ENCODE measurements at regions of chr6 and their contacts with region 1.

Region 1: GRCh38 chr6:34248727-34249551 is at the start of gene SMIM29:
- DNase-seq: peak; percentile 97
- ATAC-seq: peak; percentile 88
- H3K4me3 Mint-ChIP-seq: peak within 1 kb of the TSS; percentile 85
- H3K27ac Mint-ChIP-seq: peak within 1 kb of the TSS; percentile 89
- H3K4me1 Mint-ChIP-seq: peaks cover 37% of the 10 kb centered on the region
- H3K27me3 Mint-ChIP-seq: no peaks in the 10 kb centered on the region
- CTCF ChIP-seq: peak; percentile 88
- total RNA-seq, gene SMIM29: 13.3 to 16.4 TPM

Region 2: DNA sequence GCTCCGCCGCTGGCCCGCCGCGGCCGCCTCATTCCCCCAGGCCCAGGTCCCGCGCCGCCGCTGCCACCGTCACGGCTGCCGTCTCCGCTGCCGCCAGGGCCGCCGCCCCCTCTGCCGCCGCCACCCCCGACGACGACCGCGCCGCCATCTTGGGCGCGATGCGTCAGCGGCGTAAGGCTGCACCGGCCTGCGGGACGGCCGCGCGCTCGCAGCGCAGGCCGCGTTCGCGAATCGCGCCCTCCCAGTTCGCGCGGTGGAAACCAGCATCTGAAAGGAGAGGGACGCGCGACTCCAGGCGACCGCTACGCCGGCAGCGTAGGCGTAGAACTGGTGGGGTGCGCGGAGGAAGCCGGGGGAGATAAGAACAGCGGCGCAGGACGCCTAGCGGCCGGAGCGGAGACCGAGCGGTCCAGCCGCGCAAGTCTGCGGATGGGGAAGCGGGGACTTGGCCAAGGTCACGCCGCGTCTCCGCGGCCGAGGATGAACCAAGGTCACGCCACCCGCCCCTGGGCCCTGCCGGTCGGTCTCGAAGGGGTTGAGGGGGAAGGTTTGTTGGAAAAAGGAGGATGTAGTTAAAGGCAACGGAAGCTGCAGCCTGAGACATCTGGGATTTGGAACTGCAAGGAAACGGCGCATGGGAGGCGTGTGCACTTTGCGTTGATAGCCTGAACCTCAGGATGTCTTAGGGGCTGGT is 143.7 kb after region 1 on chr6 and contains the start of gene NUDT3:
- CTCF ChIA-PET with region 1: interaction called, 32 read pairs
- POLR2A ChIA-PET with region 1: interaction called, 7 read pairs
- intact Hi-C with region 1: loop called (anchors 1 kb)
- DNase-seq: peak; percentile 96
- ATAC-seq: peak; percentile 94
- H3K4me3 Mint-ChIP-seq: no peak within 1 kb of the TSS
- H3K27ac Mint-ChIP-seq: peak within 1 kb of the TSS; percentile 93
- H3K4me1 Mint-ChIP-seq: peaks cover 20% of the 10 kb centered on the region
- H3K27me3 Mint-ChIP-seq: no peaks in the 10 kb centered on the region
- CTCF ChIP-seq: peak; percentile 76
- total RNA-seq, gene NUDT3: 15.0 to 15.2 TPM

Region 3: GRCh38 chr6:34425498-34426410 is 176.8 kb after region 1 on chr6 and contains the start of gene RPS10:
- CTCF ChIA-PET with region 1: interaction called, 19 read pairs
- POLR2A ChIA-PET with region 1: interaction called, 33 read pairs
- intact Hi-C with region 1: no loop called
- DNase-seq: peak; percentile 92
- ATAC-seq: peak; percentile 98
- H3K4me3 Mint-ChIP-seq: peak within 1 kb of the TSS; percentile 98
- H3K27ac Mint-ChIP-seq: peak within 1 kb of the TSS; percentile 100
- H3K4me1 Mint-ChIP-seq: peaks cover 33% of the 10 kb centered on the region
- H3K27me3 Mint-ChIP-seq: peaks cover 2% of the 10 kb centered on the region
- CTCF ChIP-seq: no peak
- total RNA-seq, gene RPS10: 2,208 to 2,269 TPM